ENCODE measurements at regions of chr11 and their contacts with region 1.

Region 1: DNA sequence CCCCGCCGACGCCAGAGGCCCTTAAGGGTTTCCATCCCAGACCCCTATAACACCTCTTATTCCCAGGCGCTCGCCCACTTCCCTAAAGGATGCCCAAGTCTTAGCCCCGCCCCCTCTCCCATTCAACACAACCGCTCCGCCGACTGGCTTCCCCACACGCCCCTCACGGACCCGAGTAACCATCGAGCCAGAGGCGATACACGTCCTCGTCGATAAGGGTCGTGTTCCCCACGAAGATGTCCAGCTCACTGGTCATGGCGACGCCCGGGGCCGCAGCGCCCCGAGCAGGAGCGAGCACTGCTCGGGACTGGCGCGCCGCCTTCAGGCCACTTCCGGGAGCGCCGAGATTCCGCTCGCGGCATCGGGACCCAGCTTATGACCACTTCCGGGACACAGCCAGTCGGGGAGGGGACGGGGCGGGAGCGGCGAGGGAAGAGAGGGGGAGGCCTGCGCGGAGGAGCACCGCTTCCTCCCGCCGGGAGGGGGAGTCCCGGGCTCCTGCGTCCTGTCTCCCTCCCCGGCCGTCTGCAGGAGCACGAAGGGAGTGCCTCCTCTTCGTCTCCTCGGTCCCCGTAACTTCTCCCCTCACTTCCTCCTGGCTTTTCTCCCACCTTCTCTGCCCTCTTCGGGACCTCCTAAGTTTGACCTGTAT is at the start of gene FIBP:
- DNase-seq: peak; percentile 97
- ATAC-seq: peak; percentile 43 to 73
- H3K4me3 ChIP-seq: peak within 1 kb of the TSS; percentile 72
- H3K27ac ChIP-seq: peak within 1 kb of the TSS; percentile 93 to 96
- H3K4me1 ChIP-seq: peaks cover 50% of the 10 kb centered on the region
- CTCF ChIP-seq: peak; percentile 81
- EP300 ChIP-seq: no peak
- POLR2A ChIP-seq: peak; percentile 91
- RAD21 ChIP-seq: peak; percentile 45 to 61
- polyA plus RNA-seq, gene FIBP: 72.2 and 83.0 TPM in 2 replicates

Region 2: DNA sequence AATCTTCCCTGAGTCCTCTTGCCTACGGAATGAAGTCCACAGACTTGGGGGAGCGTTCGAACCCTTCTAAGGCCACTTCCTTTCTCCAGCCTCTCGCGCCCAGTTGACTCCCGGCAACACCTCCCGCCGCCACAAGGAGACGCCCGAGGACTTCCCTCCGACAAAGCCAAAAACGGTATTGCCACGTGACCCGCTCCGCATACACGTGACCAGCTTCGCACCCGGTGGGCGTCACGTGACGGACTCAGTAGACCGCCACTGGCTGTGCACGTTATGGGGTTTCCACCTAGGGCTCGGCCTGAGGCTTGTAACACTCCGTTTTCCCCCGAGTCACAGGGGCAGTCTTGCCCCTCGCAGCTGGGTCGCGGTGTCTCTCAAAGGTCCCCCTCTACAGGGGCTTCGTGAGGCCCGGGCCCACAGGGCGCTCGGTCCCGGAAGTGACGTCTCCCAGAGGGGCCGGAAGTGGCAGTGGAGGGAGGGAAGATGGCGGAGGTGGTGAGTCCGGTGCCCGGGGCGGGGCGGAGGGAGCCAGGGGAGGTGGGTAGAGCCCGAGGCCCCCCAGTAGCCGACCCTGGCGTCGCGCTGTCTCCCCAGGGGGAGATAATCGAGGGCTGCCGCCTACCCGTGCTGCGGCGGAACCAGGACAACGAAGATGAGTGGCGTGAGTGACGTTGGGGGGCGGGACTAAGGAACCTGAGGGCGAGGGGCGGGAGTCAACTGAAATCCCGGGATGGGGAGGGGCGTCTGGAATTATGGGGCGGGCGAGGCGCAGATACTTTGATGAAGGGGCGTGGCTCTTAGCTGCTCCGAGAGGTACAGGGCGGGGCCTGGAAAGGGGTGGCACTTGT is 176.3 kb before region 1 on chr11 and contains the start of gene KAT5:
- CTCF ChIA-PET with region 1: interaction called, 35 read pairs
- POLR2A ChIA-PET with region 1: interaction called, 11 read pairs
- DNase-seq: peak; percentile 93 to 99
- ATAC-seq: peak; percentile 88 to 92
- H3K4me3 ChIP-seq: peak within 1 kb of the TSS; percentile 60
- H3K27ac ChIP-seq: peak within 1 kb of the TSS; percentile 97 to 99
- H3K4me1 ChIP-seq: peaks cover 15% of the 10 kb centered on the region
- CTCF ChIP-seq: peak; percentile 94
- EP300 ChIP-seq: no peak
- POLR2A ChIP-seq: peak; percentile 33; the same call in 1 of the 2 replicates
- RAD21 ChIP-seq: peak; percentile 93 to 94
- polyA plus RNA-seq, gene KAT5: 25.8 and 34.6 TPM in 2 replicates

Region 3: DNA sequence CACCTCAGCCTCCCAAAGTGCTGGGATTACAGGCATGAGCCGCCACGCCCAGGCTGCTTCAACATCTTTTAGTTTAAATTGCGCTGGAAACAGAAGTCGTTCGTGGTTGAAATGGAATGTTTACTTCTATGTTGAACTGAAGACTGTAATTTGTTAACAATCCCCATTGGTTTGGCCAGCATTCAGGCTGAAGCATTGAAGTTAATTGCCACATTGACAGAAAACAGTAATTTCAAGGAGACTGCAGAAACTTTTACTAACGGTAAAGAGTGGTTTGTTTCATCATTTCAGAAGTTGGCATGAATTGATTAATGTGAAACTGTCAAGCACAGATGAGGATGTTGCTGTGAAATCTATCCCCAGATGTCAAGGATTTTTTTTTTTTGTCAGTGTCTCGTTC is 121.8 kb before region 1 on chr11:
- CTCF ChIA-PET with region 1: no interaction called
- POLR2A ChIA-PET with region 1: no interaction called
- DNase-seq: no peak
- ATAC-seq: no peak
- H3K4me3 ChIP-seq: no peak overlapping the region
- H3K27ac ChIP-seq: no peak overlapping the region
- H3K4me1 ChIP-seq: peaks cover 9% of the 10 kb centered on the region; the same call in 2 of the 3 replicates
- CTCF ChIP-seq: no peak
- EP300 ChIP-seq: no peak
- POLR2A ChIP-seq: no peak
- RAD21 ChIP-seq: no peak

Region 4: GRCh38 chr11:65859200-65859811 is 29.0 kb before region 1 on chr11:
- CTCF ChIA-PET with region 1: interaction called, 195 read pairs
- POLR2A ChIA-PET with region 1: interaction called, 31 read pairs
- DNase-seq: peak; percentile 97 to 99
- ATAC-seq: peak; percentile 57 to 82
- H3K4me3 ChIP-seq: peak overlapping the region; percentile 70
- H3K27ac ChIP-seq: peak overlapping the region; percentile 88 to 96
- H3K4me1 ChIP-seq: peaks cover 30% of the 10 kb centered on the region
- CTCF ChIP-seq: no peak
- EP300 ChIP-seq: no peak
- POLR2A ChIP-seq: peak; percentile 71
- RAD21 ChIP-seq: no peak

Region 5: DNA sequence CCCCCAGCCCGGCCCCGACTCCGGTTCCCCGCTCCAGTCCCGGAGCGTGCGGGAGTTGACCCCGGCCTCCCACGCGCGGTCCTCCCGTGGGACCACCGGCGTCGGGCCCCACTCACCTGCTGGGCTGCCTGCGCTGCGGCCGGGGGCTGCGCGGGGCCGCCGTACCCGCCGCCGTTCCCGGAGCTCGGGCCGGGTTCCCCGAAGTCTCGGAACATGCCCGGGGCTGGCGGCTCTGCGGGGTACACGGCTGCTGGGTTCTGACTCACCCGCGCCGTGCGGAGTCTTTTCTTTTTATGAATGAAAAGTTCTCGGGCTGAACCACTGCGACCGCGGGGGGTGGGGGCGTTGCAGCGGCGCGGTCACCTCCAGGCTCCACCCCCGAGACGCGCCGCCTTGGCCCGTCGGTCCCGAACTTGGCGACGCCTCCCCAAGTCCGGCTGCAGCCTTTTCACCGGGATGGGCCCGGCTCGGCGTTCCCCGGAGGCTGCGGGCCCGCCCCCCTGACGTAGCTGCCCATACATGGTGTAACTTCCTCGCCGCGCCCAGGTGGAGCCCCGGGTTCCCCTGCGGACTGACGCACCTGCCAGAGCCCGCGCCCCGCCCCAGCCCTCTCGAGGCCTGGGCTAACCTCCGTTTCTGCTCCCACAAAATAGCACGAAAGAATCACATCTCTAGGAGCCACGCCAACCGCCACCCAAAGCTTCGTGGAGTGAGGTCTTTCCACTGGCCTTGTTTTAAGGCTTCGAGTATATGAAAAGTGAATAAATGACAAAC is 12.0 kb after region 1 on chr11 and contains the start of gene FOSL1:
- CTCF ChIA-PET with region 1: interaction called, 618 read pairs
- POLR2A ChIA-PET with region 1: interaction called, 38 read pairs
- DNase-seq: peak; percentile 91 to 99
- ATAC-seq: peak; percentile 74 to 79
- H3K4me3 ChIP-seq: peak within 1 kb of the TSS; percentile 93
- H3K27ac ChIP-seq: peak within 1 kb of the TSS; percentile 97
- H3K4me1 ChIP-seq: peaks cover 59% of the 10 kb centered on the region
- CTCF ChIP-seq: no peak
- EP300 ChIP-seq: no peak
- POLR2A ChIP-seq: peak; percentile 78
- RAD21 ChIP-seq: no peak; a peak in 1 of 5 replicates
- polyA plus RNA-seq, gene FOSL1: 6.7 and 9.6 TPM in 2 replicates

Region 6: DNA sequence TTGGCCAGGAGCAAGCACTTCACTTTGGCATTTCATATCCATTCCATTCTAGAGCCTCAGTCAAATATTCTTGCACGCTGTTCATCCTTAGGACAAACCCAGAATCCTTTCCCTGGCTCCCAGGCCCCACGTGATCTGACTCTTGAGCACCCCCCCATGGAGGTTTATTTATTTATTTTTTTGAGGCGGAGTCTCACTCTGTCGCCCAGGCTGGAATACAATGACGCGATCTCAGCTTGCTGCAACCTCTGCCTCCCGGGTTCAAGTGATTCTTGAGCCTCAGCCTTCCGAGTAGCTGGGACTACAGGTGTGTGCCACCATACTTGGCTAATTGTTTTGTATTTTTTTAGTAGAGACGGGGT is 44.2 kb after region 1 on chr11:
- CTCF ChIA-PET with region 1: interaction called, 20 read pairs
- POLR2A ChIA-PET with region 1: no interaction called
- DNase-seq: peak; percentile 47 to 50
- ATAC-seq: peak; percentile 56 to 85; a peak in 4 of 6 replicates
- H3K4me3 ChIP-seq: no peak overlapping the region
- H3K27ac ChIP-seq: peak overlapping the region in 1 of 2 experiments; percentile 44; a peak in 2 of 6 replicates
- H3K4me1 ChIP-seq: peaks cover 9% of the 10 kb centered on the region; the same call in 1 of the 3 replicates
- CTCF ChIP-seq: peak; percentile 6; the same call in 1 of the 3 replicates
- EP300 ChIP-seq: no peak
- POLR2A ChIP-seq: no peak
- RAD21 ChIP-seq: no peak

Region 7: DNA sequence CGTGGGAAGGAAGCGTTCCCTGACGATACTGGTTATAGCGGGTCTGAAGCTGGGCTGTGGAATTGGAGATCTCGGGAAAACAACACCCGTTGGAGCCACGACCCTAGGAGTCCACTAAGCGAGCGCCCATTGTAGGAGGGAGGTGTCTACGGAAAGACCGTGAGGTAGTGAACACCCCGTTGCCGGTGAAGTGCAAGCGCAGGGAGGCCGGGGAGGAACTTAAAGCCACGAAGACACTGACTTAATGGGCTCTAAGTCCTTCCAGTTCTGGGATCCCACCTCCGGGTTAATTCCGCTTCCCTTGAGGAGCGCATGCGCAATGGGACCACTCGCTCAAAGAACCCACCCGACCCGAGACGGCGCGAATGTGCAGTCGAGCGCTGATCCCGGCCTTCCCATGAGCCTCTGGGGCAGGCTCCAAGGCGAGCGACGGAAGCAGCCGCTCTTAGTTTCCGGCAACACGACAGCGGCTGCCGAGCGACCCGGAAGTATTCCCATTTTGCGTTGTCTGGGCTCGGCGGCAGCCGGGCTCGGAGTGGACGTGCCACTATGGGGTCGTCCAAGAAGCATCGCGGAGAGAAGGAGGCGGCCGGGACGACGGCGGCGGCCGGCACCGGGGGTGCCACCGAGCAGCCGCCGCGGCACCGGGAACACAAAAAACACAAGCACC is 73.1 kb after region 1 on chr11 and contains the start of gene SART1:
- CTCF ChIA-PET with region 1: interaction called, 35 read pairs
- POLR2A ChIA-PET with region 1: interaction called, 3 read pairs
- DNase-seq: peak; percentile 98 to 100
- ATAC-seq: peak; percentile 91 to 96
- H3K4me3 ChIP-seq: peak within 1 kb of the TSS; percentile 95
- H3K27ac ChIP-seq: peak within 1 kb of the TSS; percentile 82 to 99
- H3K4me1 ChIP-seq: peaks cover 12% of the 10 kb centered on the region; the same call in 2 of the 3 replicates
- CTCF ChIP-seq: no peak
- EP300 ChIP-seq: no peak
- POLR2A ChIP-seq: peak; percentile 64
- RAD21 ChIP-seq: 0 out of 5 replicates have a peak, but pooled peaks of 1 of the 2 experiments have one; percentile 9
- polyA plus RNA-seq, gene SART1: 15.1 and 22.0 TPM in 2 replicates

Region 8: GRCh38 chr11:65988791-65989592 is 100.7 kb after region 1 on chr11:
- CTCF ChIA-PET with region 1: interaction called, 171 read pairs
- POLR2A ChIA-PET with region 1: interaction called, 3 read pairs
- DNase-seq: peak; percentile 89 to 96
- ATAC-seq: peak; percentile 96 to 98
- H3K4me3 ChIP-seq: no peak overlapping the region
- H3K27ac ChIP-seq: no peak overlapping the region
- H3K4me1 ChIP-seq: no peaks in the 10 kb centered on the region
- CTCF ChIP-seq: peak; percentile 99
- EP300 ChIP-seq: no peak
- POLR2A ChIP-seq: no peak
- RAD21 ChIP-seq: peak; percentile 95 to 98